ENCODE measurements at regions of chr4 and their contacts with region 1.

Region 1: DNA sequence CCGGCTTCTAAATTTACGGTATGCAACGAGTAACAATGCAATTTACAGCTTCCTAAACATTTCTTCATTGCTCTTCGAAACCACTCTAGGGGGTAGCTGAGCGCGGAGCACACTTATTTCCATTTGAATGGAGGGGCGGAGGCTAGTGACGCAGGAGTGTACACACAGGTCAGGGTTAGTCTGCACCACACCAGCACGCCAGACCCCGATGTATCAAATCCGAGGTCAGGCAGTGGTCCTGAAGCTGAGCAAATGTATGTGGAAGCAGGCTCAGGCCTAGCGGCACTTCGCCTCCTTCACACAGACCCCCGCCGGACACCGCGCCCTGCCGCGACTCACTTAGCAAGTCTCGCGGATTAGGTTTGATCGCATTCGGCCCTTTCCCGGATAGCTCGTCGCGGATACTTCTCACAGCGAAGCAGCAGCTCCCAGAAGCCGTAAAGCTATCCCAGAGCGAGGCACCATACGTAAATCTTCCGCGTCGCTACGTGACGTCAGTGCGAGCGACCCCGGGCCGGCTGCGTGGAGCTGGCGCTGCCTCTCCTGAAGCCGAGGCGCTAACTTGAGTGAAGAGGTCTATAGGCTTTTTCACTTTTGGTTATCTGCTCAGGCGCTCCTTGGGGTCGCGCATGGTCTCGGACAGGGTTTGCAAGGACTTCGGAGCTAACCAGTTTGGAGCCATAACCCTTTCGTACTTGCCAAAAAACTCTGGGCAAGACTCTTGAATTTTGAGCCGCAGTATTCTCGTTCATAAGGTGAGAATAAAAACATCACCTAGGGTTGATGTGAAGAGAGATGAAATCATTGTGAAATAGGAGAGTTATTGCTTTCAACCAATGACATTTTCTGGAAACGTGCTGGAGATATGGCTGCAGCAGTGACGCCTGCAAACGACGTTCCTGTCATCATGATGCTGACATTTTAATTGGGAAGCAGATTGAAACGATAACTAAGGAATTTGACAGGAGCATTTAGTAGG is at the start of gene AASDH:
- DNase-seq: peak; percentile 87 to 99 (median 96)
- ATAC-seq: peak; percentile 87 to 90
- H3K4me3 Mint-ChIP-seq: peak within 1 kb of the TSS; percentile 87 to 96 (median 93)
- H3K27ac Mint-ChIP-seq: peak within 1 kb of the TSS; percentile 97 to 100 (median 98)
- H3K4me1 Mint-ChIP-seq: peaks cover 29 to 49% (median 45%) of the 10 kb centered on the region in 4 donors
- H3K27me3 Mint-ChIP-seq: no peaks in the 10 kb centered on the region
- polyA plus RNA-seq, gene AASDH: 20.8 to 31.4 (median 22.5) TPM

Region 2: DNA sequence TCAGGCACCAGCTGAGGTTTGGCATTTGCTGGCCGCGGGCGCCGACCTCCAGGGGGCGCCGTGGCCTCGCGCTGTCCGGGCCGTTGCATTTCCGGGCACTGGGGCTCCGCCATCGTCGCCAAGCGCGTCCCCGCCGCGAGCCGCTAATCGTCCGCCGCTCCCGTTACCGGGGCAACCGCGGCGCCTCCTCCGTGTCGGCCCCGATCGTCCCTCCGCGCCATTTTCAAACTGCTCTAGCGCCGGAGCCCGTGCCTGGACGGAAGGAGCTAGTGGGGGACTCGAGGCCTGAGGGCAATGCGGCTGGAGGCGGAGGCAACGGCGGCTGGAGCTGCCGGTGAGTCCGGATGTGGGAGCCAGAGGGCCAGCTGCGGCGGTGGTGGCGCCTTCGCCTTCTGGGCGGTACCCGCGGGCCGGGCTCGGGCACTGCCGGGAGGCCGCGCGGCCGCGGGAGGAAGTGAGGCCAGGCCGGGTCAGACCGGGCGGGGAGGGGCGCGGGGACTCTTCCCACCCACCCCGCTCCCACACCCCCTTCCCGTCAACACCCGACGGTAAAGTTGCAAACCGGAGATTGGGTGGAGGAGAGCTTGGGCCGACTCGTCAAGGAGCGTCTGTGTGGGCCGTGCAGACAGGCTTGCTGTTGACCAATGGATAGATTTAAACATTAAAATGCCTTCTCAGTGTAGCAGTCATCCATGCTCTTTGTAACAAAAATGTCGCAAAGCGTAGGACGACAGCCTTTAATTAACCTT is 438.4 kb before region 1 on chr4 and contains the start of gene CEP135:
- POLR2A ChIA-PET with region 1: interaction called, 19 read pairs
- DNase-seq: peak; percentile 83 to 94 (median 90)
- ATAC-seq: peak; percentile 69 to 78
- H3K4me3 Mint-ChIP-seq: peak within 1 kb of the TSS; percentile 82 to 99 (median 92)
- H3K27ac Mint-ChIP-seq: peak within 1 kb of the TSS; percentile 91 to 98 (median 96)
- H3K4me1 Mint-ChIP-seq: peaks cover 26 to 56% (median 39%) of the 10 kb centered on the region in 4 donors
- H3K27me3 Mint-ChIP-seq: no peaks in the 10 kb centered on the region
- polyA plus RNA-seq, gene CEP135: 7.9 to 13.8 (median 8.3) TPM

Region 3: DNA sequence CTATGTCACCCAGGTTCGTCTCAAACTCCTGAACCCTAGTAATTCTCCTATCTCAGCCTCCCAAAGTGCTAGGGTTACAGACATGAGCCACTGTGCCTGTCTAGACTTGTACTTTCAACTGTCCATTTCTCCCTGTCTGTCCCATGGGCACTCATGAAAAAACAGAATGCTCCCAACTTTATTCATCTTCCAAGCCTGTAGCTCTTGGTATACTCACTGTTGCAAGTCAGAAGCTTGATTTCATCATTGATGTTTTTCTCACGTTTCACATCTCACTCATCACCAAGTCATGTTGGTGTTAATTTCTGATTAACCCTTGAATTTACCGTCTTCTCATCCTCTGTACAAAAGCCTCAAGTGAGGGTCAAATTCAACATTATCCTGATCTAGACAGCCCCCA is 72.8 kb after region 1 on chr4:
- POLR2A ChIA-PET with region 1: no interaction called
- DNase-seq: no peak
- ATAC-seq: no peak
- H3K4me3 Mint-ChIP-seq: no peak overlapping the region
- H3K27ac Mint-ChIP-seq: peak overlapping the region in 3 of 10 donors; percentile 12 to 61 (median 42)
- H3K4me1 Mint-ChIP-seq: peaks cover 18 to 22% (median 20%) of the 10 kb centered on the region in 4 donors
- H3K27me3 Mint-ChIP-seq: no peaks in the 10 kb centered on the region

Region 4: GRCh38 chr4:56907489-56908205 is 520.3 kb after region 1 on chr4 and contains the start of gene REST:
- POLR2A ChIA-PET with region 1: interaction called, 20 read pairs
- DNase-seq: peak; percentile 73 to 92 (median 86)
- ATAC-seq: peak; percentile 64 to 70
- H3K4me3 Mint-ChIP-seq: peak within 1 kb of the TSS; percentile 85 to 98 (median 96)
- H3K27ac Mint-ChIP-seq: peak within 1 kb of the TSS; percentile 86 to 96 (median 92)
- H3K4me1 Mint-ChIP-seq: peaks cover 16 to 50% (median 43%) of the 10 kb centered on the region in 4 donors
- H3K27me3 Mint-ChIP-seq: no peaks in the 10 kb centered on the region
- polyA plus RNA-seq, gene REST: 139 to 155 (median 149) TPM

Measured in naive thymus-derived CD8-positive, alpha-beta T cell (primary cell).